PC-9 (cell line): ENCODE measurements at regions of chrX and their contacts with region 1.

Region 1: GRCh38 chrX:23554304-23554703 is 113.0 kb upstream of the PRDX4 start:
- DNase-seq: peak in 1 of 2 experiments; percentile 40
- H3K4me3 ChIP-seq: no peak overlapping the region
- H3K27ac ChIP-seq: no peak overlapping the region
- H3K4me1 ChIP-seq: no peaks in the 10 kb centered on the region
- H3K27me3 ChIP-seq: no peaks in the 10 kb centered on the region
- CTCF ChIP-seq: peak; percentile 75

Region 2: GRCh38 chrX:23012162-23012561 is 542.1 kb before region 1 on chrX:
- CTCF ChIA-PET with region 1: no interaction called
- POLR2A ChIA-PET with region 1: no interaction called
- intact Hi-C with region 1: loop called (anchors 10 kb)
- DNase-seq: no peak
- H3K4me3 ChIP-seq: no peak overlapping the region
- H3K27ac ChIP-seq: no peak overlapping the region
- H3K4me1 ChIP-seq: no peaks in the 10 kb centered on the region
- H3K27me3 ChIP-seq: no peaks in the 10 kb centered on the region
- CTCF ChIP-seq: no peak

Region 3: GRCh38 chrX:23327104-23327503 is 227.2 kb before region 1 on chrX:
- CTCF ChIA-PET with region 1: no interaction called
- POLR2A ChIA-PET with region 1: no interaction called
- intact Hi-C with region 1: loop called (anchors 10 kb)
- DNase-seq: no peak
- H3K4me3 ChIP-seq: no peak overlapping the region
- H3K27ac ChIP-seq: no peak overlapping the region
- H3K4me1 ChIP-seq: no peaks in the 10 kb centered on the region
- H3K27me3 ChIP-seq: no peaks in the 10 kb centered on the region
- CTCF ChIP-seq: no peak

Region 4: GRCh38 chrX:23503835-23504542 is 50.3 kb before region 1 on chrX:
- CTCF ChIA-PET with region 1: no interaction called
- POLR2A ChIA-PET with region 1: no interaction called
- intact Hi-C with region 1: loop called (anchors 10 kb)
- DNase-seq: peak; percentile 89 to 90
- H3K4me3 ChIP-seq: peak overlapping the region; percentile 46; the same call in 1 of the 2 replicates
- H3K27ac ChIP-seq: peak overlapping the region; percentile 43
- H3K4me1 ChIP-seq: peaks cover 26% of the 10 kb centered on the region
- H3K27me3 ChIP-seq: no peaks in the 10 kb centered on the region
- CTCF ChIP-seq: no peak

Region 5: DNA sequence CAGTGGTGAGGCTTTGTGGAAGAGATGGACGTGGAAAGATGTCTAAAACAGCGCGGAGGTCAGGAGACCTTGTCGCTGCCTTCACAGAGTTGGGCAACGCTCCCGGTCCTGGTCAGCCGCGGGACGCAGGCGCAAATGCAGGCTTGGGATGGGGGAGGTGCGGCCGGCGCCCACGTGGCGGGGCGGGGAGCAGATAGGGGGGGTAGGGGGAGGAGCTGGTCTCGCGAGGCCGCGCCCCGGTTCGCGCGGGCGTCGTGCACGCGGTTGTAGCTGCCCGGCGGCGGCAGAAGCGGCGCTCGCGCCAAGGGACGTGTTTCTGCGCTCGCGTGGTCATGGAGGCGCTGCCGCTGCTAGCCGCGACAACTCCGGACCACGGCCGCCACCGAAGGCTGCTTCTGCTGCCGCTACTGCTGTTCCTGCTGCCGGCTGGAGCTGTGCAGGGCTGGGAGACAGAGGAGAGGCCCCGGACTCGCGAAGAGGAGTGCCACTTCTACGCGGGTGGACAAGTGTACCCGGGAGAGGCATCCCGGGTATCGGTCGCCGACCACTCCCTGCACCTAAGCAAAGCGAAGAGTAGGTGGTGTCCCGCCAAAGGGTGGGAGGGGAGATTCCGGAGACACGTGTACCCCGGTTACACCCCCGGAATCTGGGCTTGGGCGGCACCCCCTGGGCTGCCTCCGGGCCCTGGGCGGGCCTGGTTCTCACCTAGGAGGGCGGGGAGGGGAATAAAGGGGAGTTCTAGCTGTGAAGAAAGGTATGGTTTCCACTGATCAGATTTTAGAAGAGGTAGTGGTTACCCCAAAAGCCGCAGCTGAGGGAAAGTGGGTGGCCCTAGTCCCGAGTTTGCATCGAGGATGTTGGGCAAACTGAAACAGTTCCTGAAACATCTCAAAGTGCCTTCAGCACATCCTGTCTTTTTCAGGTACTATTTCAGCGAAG is 113.2 kb after region 1 on chrX and contains the start of gene PRDX4:
- CTCF ChIA-PET with region 1: no interaction called
- POLR2A ChIA-PET with region 1: no interaction called
- intact Hi-C with region 1: no loop called
- DNase-seq: peak; percentile 60 to 87
- H3K4me3 ChIP-seq: peak within 1 kb of the TSS; percentile 61
- H3K27ac ChIP-seq: peak within 1 kb of the TSS; percentile 81
- H3K4me1 ChIP-seq: peaks cover 12% of the 10 kb centered on the region; the same call in 1 of the 2 replicates
- H3K27me3 ChIP-seq: no peaks in the 10 kb centered on the region
- CTCF ChIP-seq: no peak
- total RNA-seq, gene PRDX4: 60.6 and 76.4 TPM in 2 replicates

Region 6: DNA sequence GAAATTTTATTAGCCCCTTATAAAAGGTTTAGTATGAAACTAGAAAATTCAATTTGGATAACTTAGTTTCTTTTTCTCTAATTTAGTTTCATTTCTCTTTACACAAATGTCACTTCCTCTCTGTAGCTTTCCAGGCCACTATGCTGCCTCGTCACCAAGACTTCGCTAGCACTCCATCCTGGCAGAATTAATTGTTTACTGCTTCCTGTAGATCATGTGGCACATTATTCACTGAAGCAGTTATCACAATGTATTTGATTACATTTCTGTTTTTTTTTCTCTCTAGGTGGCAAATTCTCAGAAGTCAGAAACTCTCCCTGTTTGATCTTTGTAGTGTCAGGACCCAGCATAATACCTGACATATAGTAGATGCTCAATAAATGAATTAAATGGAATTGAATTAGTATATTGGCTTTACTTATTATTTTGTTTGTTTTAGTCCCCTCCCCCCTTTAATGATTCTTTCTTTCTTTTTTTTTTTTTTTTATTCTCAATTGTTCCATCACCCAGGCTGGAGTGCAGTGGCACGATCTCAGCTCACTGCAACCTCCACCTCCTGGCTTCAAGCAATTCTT is 219.4 kb after region 1 on chrX:
- CTCF ChIA-PET with region 1: no interaction called
- POLR2A ChIA-PET with region 1: no interaction called
- intact Hi-C with region 1: no loop called
- DNase-seq: no peak
- H3K4me3 ChIP-seq: no peak overlapping the region
- H3K27ac ChIP-seq: no peak overlapping the region
- H3K4me1 ChIP-seq: 0 out of 2 replicates have a peak, but pooled peaks cover 2% of the 10 kb centered on the region
- H3K27me3 ChIP-seq: no peaks in the 10 kb centered on the region
- CTCF ChIP-seq: no peak

Region 7: GRCh38 chrX:23871905-23872546 is 317.7 kb after region 1 on chrX:
- CTCF ChIA-PET with region 1: no interaction called
- POLR2A ChIA-PET with region 1: no interaction called
- intact Hi-C with region 1: no loop called
- DNase-seq: no peak
- H3K4me3 ChIP-seq: no peak overlapping the region
- H3K27ac ChIP-seq: no peak overlapping the region
- H3K4me1 ChIP-seq: 0 out of 2 replicates have a peak, but pooled peaks cover 3% of the 10 kb centered on the region
- H3K27me3 ChIP-seq: no peaks in the 10 kb centered on the region
- CTCF ChIP-seq: no peak

Region 8: GRCh38 chrX:23959781-23960180 is 405.5 kb after region 1 on chrX:
- CTCF ChIA-PET with region 1: no interaction called
- POLR2A ChIA-PET with region 1: no interaction called
- intact Hi-C with region 1: no loop called
- DNase-seq: no peak
- H3K4me3 ChIP-seq: no peak overlapping the region
- H3K27ac ChIP-seq: no peak overlapping the region
- H3K4me1 ChIP-seq: no peaks in the 10 kb centered on the region
- H3K27me3 ChIP-seq: no peaks in the 10 kb centered on the region
- CTCF ChIP-seq: no peak